Activated naive CD4-positive, alpha-beta T cell treated with anti-CD3 and anti-CD28 coated beads for 36 hours (primary cell): ENCODE measurements at regions of chr6 and their contacts with region 1.

Region 1: DNA sequence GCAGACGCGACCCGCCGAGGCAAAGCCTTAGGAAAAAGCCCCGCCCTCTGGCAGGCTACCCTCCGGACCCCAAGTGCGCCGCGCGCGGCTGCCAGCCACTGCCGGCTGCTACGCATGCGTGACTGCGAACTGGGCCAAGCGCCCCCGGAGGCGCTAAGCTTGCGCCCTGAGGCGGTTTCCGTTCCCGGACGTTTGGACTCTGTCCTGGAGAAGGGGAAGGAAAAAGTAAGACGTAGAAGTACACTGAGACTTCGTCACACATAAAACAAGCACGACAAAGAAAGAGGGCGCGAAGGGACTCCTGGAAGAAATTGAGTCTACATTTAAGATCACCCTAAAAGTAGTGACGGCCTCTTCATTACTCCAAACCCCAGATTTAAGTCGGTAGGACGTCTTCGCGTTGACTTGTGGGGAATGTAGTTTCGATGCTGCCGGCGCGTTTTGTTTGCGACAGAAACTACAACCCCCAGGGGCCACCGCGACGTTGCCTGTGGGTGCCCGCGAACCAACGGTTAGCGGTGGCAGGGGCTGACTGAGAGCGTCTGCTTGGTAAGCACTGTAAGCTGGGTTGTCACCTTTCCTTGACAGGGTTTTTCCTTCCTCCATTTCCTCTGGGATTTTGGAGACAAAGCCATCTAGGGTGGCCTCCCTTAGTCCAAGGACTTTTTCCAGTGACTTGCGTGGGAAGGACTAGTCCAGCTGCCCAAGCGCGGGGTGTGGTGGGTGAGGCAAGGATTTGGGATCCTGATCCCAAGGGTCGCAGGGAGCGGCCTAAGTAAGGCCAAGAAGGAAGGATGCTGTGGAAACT is at the start of gene CEP57L1:
- DNase-seq: peak; percentile 97
- H3K4me3 Mint-ChIP-seq: peak within 1 kb of the TSS; percentile 84
- H3K27ac Mint-ChIP-seq: peak within 1 kb of the TSS; percentile 95
- H3K4me1 Mint-ChIP-seq: peaks cover 38% of the 10 kb centered on the region
- H3K27me3 Mint-ChIP-seq: no peaks in the 10 kb centered on the region
- total RNA-seq, gene CEP57L1: 33.3 to 33.5 TPM

Region 2: DNA sequence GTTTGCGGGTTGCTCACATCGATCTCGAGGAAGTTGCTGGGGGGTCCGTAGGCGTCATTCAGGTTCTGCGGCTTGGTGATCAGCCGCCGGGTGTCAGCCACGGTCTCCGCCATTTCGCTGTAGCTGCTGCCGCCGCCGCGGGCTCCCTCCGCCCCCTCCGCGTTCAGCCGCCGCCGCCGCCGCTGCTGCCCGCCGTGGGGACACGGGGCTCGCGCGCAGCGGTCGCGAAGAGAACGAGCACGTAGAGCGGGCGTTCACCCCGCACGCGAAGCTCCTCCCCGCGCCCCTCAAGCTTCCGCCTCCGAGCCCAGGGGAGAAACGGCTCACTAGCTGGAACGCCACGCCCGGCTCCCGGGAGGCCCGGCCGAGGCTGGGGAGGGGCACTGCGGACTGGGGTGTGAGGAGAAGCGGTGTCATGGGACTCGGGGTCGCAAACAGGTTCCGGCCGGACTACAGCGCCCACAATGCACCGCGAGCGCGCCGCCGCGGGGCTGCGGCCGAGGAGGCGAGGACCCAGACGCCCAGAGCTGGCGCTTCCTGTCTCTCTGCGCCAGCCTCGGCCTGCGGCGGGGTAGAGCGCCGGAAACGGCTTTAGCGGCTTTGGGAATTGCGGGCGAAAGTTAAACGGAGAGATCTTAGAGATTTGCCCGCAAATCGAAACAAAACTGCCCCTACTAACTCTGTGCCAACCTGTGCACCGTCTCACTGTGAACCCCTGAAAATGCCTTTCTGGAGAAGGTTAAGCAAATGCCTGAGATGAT is 834.2 kb before region 1 on chr6 and contains the start of gene SNX3:
- CTCF ChIA-PET with region 1: no interaction called
- intact Hi-C with region 1: loop called (anchors 10 kb)
- DNase-seq: peak; percentile 90
- H3K4me3 Mint-ChIP-seq: peak within 1 kb of the TSS; percentile 77
- H3K27ac Mint-ChIP-seq: peak within 1 kb of the TSS; percentile 89
- H3K4me1 Mint-ChIP-seq: peaks cover 19% of the 10 kb centered on the region
- H3K27me3 Mint-ChIP-seq: no peaks in the 10 kb centered on the region
- total RNA-seq, gene SNX3: 59.9 to 65.7 TPM

Region 3: DNA sequence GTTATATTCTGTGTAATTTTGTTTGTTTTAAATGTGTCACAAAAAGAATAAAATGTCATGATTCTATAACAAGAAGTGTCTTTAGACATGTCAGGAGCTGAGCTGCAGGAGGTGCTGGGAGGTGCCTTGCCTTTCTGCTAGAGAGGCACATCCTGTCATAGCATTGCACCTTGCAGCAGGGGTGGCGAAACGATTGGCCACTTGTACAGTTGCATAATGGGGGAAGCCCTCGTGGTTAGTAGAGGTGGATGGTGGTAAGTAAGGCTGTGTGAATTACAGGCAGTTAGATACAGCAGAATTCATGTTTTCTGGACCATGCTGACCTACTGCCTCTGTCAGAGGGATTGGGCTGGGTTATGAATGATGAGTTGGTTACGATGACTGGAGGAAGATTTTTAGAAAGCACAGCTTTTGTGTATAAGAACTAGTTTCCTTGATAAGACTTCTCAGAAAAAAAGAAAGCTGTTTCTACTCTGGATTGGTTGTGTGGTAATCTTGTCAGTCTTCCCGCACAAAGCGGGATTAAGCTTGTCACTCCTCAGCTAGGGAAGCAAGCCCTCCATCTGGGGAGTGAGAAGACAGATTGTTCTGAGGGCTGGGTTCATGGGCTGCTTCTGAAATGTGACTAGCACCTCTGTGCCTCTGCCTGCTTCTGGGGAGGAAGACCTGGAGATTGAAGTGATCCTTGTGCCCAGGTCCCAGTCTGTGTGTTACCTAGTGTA is 459.6 kb before region 1 on chr6:
- CTCF ChIA-PET with region 1: no interaction called
- intact Hi-C with region 1: loop called (anchors 10 kb)
- DNase-seq: peak; percentile 76
- H3K4me3 Mint-ChIP-seq: no peak overlapping the region
- H3K27ac Mint-ChIP-seq: no peak overlapping the region
- H3K4me1 Mint-ChIP-seq: peaks cover 45% of the 10 kb centered on the region
- H3K27me3 Mint-ChIP-seq: no peaks in the 10 kb centered on the region

Region 4: DNA sequence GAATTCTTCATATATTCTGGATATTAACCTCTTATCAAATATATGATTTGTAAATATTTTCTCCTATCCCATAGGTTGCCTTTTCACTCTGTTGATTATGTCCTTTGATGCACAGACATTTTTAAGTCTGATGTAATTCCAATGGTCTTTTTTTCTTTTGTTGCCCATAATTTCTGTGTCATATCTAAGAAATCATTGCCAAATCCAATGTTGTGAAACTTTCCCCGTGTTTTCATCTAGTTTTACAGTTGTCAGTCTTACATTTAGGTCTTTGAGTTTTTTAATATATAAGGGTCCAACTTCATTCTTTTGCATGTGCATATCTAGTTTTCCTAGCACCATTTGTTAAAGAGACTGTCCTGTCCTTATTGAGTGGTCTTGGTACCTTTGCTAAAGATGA is 112.1 kb before region 1 on chr6:
- CTCF ChIA-PET with region 1: no interaction called
- intact Hi-C with region 1: no loop called
- DNase-seq: no peak
- H3K4me3 Mint-ChIP-seq: no peak overlapping the region
- H3K27ac Mint-ChIP-seq: no peak overlapping the region
- H3K4me1 Mint-ChIP-seq: no peaks in the 10 kb centered on the region
- H3K27me3 Mint-ChIP-seq: no peaks in the 10 kb centered on the region

Region 5: GRCh38 chr6:109165392-109165974 is 70.3 kb after region 1 on chr6:
- CTCF ChIA-PET with region 1: no interaction called
- intact Hi-C with region 1: no loop called
- DNase-seq: no peak
- H3K4me3 Mint-ChIP-seq: no peak overlapping the region
- H3K27ac Mint-ChIP-seq: no peak overlapping the region
- H3K4me1 Mint-ChIP-seq: no peaks in the 10 kb centered on the region
- H3K27me3 Mint-ChIP-seq: no peaks in the 10 kb centered on the region

Region 6: DNA sequence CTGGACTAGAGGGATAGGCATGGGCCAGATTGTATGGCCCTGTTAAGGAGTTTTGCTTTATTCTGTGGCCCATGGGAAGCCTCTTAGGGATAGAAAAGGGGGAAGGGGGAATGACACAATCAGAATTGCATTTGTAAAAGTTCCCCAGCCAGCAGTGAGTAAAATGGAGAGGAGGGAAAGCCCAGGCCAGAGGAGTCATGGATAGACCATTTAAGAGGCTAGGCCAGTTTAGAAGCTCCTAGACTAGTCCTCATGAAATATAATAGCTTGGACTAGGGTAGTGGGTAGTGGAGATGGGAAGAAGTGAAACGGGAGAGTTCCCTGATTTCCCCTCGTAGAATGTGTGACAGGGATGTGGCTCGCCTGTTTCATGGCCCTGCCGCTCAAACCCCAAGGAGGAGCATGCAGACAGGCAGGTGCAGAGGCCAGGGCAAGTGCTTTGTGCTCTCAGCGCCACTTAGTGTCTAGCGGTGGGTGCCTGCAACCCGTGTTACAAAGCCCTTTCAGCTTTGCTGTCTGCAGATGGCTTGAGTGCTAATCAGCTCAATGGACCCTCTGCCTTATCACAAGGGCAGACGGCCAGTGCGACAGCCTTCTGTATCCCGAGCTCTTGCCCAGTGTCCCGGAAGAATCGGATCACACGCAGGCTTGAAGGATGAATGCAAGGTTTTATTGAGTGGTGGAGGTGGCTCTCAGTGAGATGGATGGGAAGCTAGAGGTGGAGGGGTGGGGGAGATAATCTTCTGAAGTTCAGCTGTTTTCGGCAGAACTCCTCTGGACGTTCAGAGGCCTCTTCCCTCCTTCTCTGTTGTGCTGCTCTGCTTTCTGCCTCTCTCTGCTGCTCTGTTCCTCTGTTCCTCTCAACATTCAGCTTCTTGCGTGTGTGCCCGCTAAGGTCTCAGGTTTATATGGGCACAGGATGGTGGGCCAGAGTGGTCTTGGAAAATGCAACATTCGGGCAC is 141.2 kb after region 1 on chr6:
- CTCF ChIA-PET with region 1: no interaction called
- intact Hi-C with region 1: loop called (anchors 1 kb)
- DNase-seq: peak; percentile 53
- H3K4me3 Mint-ChIP-seq: peak overlapping the region; percentile 11
- H3K27ac Mint-ChIP-seq: no peak overlapping the region
- H3K4me1 Mint-ChIP-seq: peaks cover 11% of the 10 kb centered on the region
- H3K27me3 Mint-ChIP-seq: no peaks in the 10 kb centered on the region

Region 7: DNA sequence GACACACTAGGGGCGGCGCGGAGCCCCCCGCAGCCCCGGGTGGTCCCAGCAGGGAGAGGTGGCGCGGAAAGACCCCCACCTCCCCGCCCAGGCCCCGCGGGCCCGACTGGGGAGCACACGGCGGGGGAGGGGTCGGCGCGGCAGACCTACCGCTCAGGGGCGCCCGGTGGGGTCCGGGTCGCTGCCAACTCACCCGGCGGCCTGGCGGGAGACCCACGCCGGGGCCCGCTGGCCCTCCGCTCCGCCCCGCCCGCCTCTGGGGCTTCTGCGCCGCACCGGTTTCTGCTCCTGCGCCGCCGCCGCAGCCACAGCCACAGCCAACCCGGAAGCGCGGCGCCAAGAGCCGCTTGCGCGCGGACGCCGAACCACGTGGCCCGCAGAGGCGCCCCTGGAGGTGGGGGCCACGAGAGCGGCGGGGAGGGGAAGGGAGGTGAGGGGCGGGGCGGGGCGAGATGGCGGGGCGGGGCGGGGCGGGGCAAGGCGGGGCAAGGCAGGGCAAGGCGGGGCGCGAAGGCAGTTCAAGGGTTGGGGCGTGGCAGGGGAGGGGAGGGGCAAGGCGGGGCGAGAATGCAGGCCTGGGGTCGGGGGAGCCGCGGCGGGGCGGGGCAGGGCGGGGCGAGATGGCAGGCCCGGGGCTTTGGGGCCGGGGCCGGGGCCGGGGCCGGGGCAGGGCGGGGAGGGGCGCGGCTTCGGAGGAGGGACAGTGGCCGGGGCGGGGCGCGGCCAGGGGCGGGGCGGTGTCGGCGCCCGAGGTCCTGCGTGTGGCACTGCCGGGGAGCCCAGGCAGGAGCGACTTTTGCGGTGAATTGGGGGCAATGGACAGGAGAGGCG is 387.9 kb after region 1 on chr6 and contains the start of gene ZBTB24:
- CTCF ChIA-PET with region 1: no interaction called
- intact Hi-C with region 1: loop called (anchors 1 kb)
- DNase-seq: peak; percentile 88
- H3K4me3 Mint-ChIP-seq: peak within 1 kb of the TSS; percentile 85
- H3K27ac Mint-ChIP-seq: peak within 1 kb of the TSS; percentile 80
- H3K4me1 Mint-ChIP-seq: peaks cover 37% of the 10 kb centered on the region
- H3K27me3 Mint-ChIP-seq: no peaks in the 10 kb centered on the region
- total RNA-seq, gene ZBTB24: 6.9 to 7.4 TPM